Tibial artery (tissue), 4 donors: ENCODE measurements at regions of chr7 and their contacts with region 1.

Region 1: GRCh38 chr7:2241580-2242540 is at the starts of genes MRM2 and NUDT1:
- DNase-seq: peak; percentile 81 to 87
- H3K4me3 ChIP-seq: peak within 1 kb of the TSS; percentile 84 to 88
- H3K27ac ChIP-seq: peak within 1 kb of the TSS; percentile 64
- H3K4me1 ChIP-seq: peaks cover 0 to 27% (median 18%) of the 10 kb centered on the region in 4 donors
- H3K27me3 ChIP-seq: no peaks in the 10 kb centered on the region
- CTCF ChIP-seq: no peak

Region 2: DNA sequence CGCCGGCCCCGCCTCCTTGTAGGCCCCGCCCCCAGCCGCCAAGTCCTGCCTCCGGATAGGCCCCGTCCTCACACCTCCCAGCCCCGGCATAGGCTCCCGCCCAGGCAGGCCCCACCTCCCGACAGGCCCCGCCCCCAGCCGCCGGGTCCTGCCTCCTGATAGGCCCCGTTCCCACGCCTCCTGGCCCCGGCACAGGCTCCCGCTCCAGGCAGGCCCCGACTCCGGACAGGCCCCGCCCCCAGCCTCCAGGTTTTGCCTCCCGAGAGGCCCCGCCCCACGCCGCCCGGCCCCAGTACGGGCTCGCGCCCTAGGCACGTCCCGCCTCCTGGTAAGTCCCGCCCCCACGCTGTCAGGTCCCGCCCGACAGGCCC is 782.4 kb before region 1 on chr7:
- intact Hi-C with region 1: loop called (anchors 5 kb)
- DNase-seq: peak; percentile 99 to 100
- H3K4me3 ChIP-seq: peak overlapping the region; percentile 86 to 88
- H3K27ac ChIP-seq: peak overlapping the region; percentile 87 to 92
- H3K4me1 ChIP-seq: peaks cover 0 to 88% (median 66%) of the 10 kb centered on the region in 4 donors
- H3K27me3 ChIP-seq: no peaks in the 10 kb centered on the region
- CTCF ChIP-seq: no peak